Heart left ventricle (tissue), 16 donors: ENCODE measurements at regions of chr9 and their contacts with region 1.

Region 1: GRCh38 chr9:75487856-75488718 is 399.8 kb downstream of the OSTF1 start:
- DNase-seq: peak in 2 of 5 donors; percentile 28
- ATAC-seq: peak in 2 of 4 donors; percentile 38 to 47
- H3K4me3 ChIP-seq: no peak overlapping the region
- H3K27ac ChIP-seq: no peak overlapping the region
- H3K4me1 ChIP-seq: peaks cover 0 to 27% (median 6%) of the 10 kb centered on the region in 12 donors
- H3K27me3 ChIP-seq: no peaks in the 10 kb centered on the region
- CTCF ChIP-seq: no peak
- POLR2A ChIP-seq: no peak

Region 2: DNA sequence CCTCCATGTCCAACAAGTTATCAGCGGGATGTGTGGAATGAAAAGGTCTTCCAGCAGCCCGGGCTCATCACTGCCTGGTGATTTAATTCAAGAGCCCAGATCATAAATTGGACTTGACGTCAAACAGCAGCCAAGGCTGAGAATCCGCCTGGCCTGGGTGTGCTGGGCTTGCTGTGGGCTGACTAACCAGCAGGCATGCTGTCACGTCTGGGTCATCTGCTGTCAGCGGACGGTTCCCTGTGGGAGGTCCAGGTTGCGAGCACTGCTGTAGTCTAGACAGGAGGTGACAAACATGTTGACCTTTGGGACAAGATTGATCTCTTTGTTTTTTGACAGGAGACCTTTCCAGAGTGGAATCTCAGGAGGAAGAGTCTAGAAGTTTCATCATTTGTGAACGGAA is 110.1 kb before region 1 on chr9:
- intact Hi-C with region 1: loop called in 1 of 10 experiments (anchors 10 kb)
- DNase-seq: peak; percentile 22 to 85 (median 75)
- ATAC-seq: peak; percentile 51 to 98 (median 82)
- H3K4me3 ChIP-seq: no peak overlapping the region
- H3K27ac ChIP-seq: no peak overlapping the region
- H3K4me1 ChIP-seq: peaks cover 0 to 9% (median 0%) of the 10 kb centered on the region in 12 donors
- H3K27me3 ChIP-seq: no peaks in the 10 kb centered on the region
- CTCF ChIP-seq: no peak
- POLR2A ChIP-seq: no peak

Region 3: GRCh38 chr9:75429531-75430475 is 58.3 kb before region 1 on chr9:
- intact Hi-C with region 1: loop called in 1 of 10 experiments (anchors 5 kb)
- DNase-seq: no peak
- ATAC-seq: peak in 2 of 4 donors; percentile 29 to 52
- H3K4me3 ChIP-seq: no peak overlapping the region
- H3K27ac ChIP-seq: peak overlapping the region in 9 of 12 donors; percentile 4 to 57 (median 33)
- H3K4me1 ChIP-seq: peaks cover 0 to 43% (median 6%) of the 10 kb centered on the region in 12 donors
- H3K27me3 ChIP-seq: no peaks in the 10 kb centered on the region
- CTCF ChIP-seq: no peak
- POLR2A ChIP-seq: no peak

Region 4: GRCh38 chr9:75539523-75539922 is 51.4 kb after region 1 on chr9:
- intact Hi-C with region 1: loop called in 1 of 10 experiments (anchors 5 kb)
- DNase-seq: no peak
- ATAC-seq: peak in 2 of 4 donors; percentile 41 to 76
- H3K4me3 ChIP-seq: no peak overlapping the region
- H3K27ac ChIP-seq: peak overlapping the region in 1 of 12 donors; percentile 23
- H3K4me1 ChIP-seq: peaks cover 0 to 15% (median 0%) of the 10 kb centered on the region in 12 donors
- H3K27me3 ChIP-seq: no peaks in the 10 kb centered on the region
- CTCF ChIP-seq: no peak
- POLR2A ChIP-seq: no peak

Region 5: DNA sequence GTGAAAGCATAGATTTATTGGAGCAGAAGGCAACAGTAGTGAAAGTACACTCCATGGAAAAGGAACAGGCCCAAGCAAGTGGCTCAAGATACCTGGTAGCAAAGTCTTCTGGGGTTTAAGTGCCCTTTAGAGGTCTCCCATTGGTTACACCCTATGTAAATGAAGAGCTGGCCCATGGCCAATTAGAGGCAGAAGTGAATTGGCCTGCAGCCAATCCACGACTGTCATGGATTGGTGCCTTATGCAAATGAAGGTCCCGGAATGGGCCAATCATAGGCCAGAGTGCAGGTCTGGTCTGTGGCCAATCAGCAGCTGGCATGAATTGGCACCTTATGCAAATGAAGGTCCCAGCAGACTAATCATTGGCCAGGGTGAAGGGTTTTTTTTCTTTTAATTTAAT is 338.2 kb after region 1 on chr9:
- intact Hi-C with region 1: loop called in 1 of 10 experiments (anchors 10 kb)
- DNase-seq: peak in 1 of 5 donors; percentile 23
- ATAC-seq: no peak
- H3K4me3 ChIP-seq: no peak overlapping the region
- H3K27ac ChIP-seq: no peak overlapping the region
- H3K4me1 ChIP-seq: peaks cover 0 to 14% (median 9%) of the 10 kb centered on the region in 12 donors
- H3K27me3 ChIP-seq: no peaks in the 10 kb centered on the region
- CTCF ChIP-seq: no peak
- POLR2A ChIP-seq: no peak